H1 (cell line): ENCODE measurements at regions of chr7 and their contacts with region 1.

Region 1: GRCh38 chr7:32495298-32496176 is at the start of gene AVL9:
- DNase-seq: peak; percentile 89 to 97
- H3K4me3 ChIP-seq: peak within 1 kb of the TSS; percentile 81 to 95 (median 84)
- H3K27ac ChIP-seq: peak within 1 kb of the TSS; percentile 91
- H3K4me1 ChIP-seq: peaks cover 0 to 6% (median 0%) of the 10 kb centered on the region in 4 experiments; a peak in 2 of 7 replicates
- H3K27me3 ChIP-seq: no peaks in the 10 kb centered on the region
- CTCF ChIP-seq: no peak; a peak in 1 of 4 replicates
- EP300 ChIP-seq: no peak; a peak in 1 of 3 replicates
- POLR2A ChIP-seq: peak; percentile 90 to 99
- RAD21 ChIP-seq: 0 out of 4 replicates have a peak, but pooled peaks of 1 of the 2 experiments have one; percentile 3
- total RNA-seq, gene AVL9: 42.1 and 43.6 TPM in 2 replicates

Region 2: GRCh38 chr7:32218154-32218467 is 277.4 kb before region 1 on chr7:
- CTCF ChIA-PET with region 1: no interaction called
- POLR2A ChIA-PET with region 1: no interaction called
- DNase-seq: peak in 1 of 2 experiments; percentile 17
- H3K4me3 ChIP-seq: no peak overlapping the region
- H3K27ac ChIP-seq: no peak overlapping the region
- H3K4me1 ChIP-seq: no peaks in the 10 kb centered on the region
- H3K27me3 ChIP-seq: no peaks in the 10 kb centered on the region
- CTCF ChIP-seq: no peak
- EP300 ChIP-seq: no peak
- POLR2A ChIP-seq: no peak
- RAD21 ChIP-seq: no peak

Region 3: GRCh38 chr7:32427769-32428291 is 67.7 kb before region 1 on chr7:
- CTCF ChIA-PET with region 1: no interaction called
- POLR2A ChIA-PET with region 1: no interaction called
- DNase-seq: peak; percentile 87 to 97
- H3K4me3 ChIP-seq: peak overlapping the region; percentile 24 to 58 (median 48); a peak in 7 of 8 replicates
- H3K27ac ChIP-seq: no peak overlapping the region
- H3K4me1 ChIP-seq: peaks cover 0 to 10% (median 0%) of the 10 kb centered on the region in 4 experiments; a peak in 5 of 7 replicates
- H3K27me3 ChIP-seq: peaks cover 13 to 44% (median 23%) of the 10 kb centered on the region in 4 experiments
- CTCF ChIP-seq: peak; percentile 43 to 70 (median 47)
- EP300 ChIP-seq: no peak
- POLR2A ChIP-seq: no peak
- RAD21 ChIP-seq: peak in 1 of 2 experiments; percentile 37; a peak in 2 of 4 replicates

Region 4: DNA sequence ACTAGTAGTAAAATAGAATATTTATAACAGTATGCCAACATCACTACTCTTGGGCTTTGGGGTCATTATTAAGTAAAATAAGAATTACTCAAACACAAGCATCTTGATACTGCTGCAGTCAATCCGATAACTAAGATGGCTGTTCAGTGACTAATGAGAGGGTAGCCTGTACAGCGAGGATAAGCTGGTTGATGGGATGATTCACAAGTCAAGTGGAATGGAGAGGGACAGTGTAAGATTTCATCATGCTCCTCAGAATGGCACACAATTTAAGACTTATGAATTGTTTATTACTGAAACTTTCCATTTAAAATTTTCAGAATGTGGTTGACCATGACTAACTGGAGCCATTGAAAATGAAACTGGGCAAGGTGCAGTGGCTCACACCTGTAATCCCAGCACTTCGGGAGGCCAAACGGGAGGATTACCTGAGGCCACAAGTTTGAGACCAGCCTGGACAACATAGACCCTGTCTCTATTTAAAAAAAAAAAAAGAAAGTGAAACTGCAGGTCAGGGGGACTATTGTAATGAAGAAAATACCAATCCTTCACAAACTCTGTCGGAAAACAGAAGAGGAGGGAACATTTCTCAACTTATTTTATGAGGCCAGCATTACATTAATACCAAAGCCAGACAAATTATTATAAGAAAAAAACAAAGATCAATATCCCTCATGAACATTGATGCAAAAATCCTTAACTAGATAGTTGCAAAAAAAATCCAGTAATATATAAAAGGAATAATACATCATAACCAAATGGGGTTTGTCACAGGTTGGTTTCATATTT is 10.9 kb after region 1 on chr7:
- CTCF ChIA-PET with region 1: interaction called, 3 read pairs
- POLR2A ChIA-PET with region 1: interaction called, 10 read pairs
- DNase-seq: no peak
- H3K4me3 ChIP-seq: no peak overlapping the region
- H3K27ac ChIP-seq: no peak overlapping the region
- H3K4me1 ChIP-seq: no peaks in the 10 kb centered on the region; a peak in 1 of 7 replicates
- H3K27me3 ChIP-seq: no peaks in the 10 kb centered on the region
- CTCF ChIP-seq: no peak
- EP300 ChIP-seq: no peak
- POLR2A ChIP-seq: no peak
- RAD21 ChIP-seq: no peak

Region 5: DNA sequence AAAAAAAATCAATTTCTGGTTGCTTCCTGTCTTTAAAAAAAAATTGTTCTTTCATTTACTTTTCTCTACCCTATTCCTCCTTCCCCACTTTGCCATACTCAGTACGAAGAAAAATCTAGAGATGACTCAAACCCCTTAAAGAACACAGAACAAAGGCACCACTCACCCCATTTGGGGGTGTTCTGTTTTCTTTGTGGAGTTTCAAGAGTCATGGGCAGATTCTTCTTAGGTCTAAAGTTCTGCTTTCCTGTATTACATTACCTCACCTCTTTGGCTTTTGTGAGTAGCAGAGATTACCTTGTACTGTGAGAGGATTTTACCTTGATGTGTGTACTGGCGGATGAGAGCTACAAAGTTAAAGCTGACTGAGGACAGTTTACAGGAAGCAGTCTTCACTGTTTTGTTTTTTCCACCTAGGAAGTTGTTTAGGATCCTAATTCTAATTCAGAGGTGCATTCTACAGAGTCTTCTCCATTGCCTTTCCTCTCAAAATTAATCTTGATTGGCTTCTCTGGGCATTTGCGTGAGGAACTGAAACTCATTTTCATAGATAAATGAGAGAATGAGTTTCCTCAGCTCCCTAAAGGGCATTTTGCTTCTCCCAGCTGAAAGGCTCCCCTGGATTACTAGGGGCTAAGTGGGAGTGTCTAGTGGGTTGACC is 20.5 kb after region 1 on chr7:
- CTCF ChIA-PET with region 1: no interaction called
- POLR2A ChIA-PET with region 1: interaction called, 13 read pairs
- DNase-seq: no peak
- H3K4me3 ChIP-seq: no peak overlapping the region
- H3K27ac ChIP-seq: no peak overlapping the region
- H3K4me1 ChIP-seq: peaks cover 2 to 10% (median 6%) of the 10 kb centered on the region in 4 experiments; a peak in 4 of 7 replicates
- H3K27me3 ChIP-seq: no peaks in the 10 kb centered on the region
- CTCF ChIP-seq: no peak
- EP300 ChIP-seq: no peak
- POLR2A ChIP-seq: no peak
- RAD21 ChIP-seq: no peak

Region 6: GRCh38 chr7:32533276-32534029 is 37.9 kb after region 1 on chr7:
- CTCF ChIA-PET with region 1: no interaction called
- POLR2A ChIA-PET with region 1: interaction called, 15 read pairs
- DNase-seq: no peak
- H3K4me3 ChIP-seq: no peak overlapping the region
- H3K27ac ChIP-seq: no peak overlapping the region
- H3K4me1 ChIP-seq: peaks cover 2 to 12% (median 6%) of the 10 kb centered on the region in 4 experiments; a peak in 6 of 7 replicates
- H3K27me3 ChIP-seq: peaks cover 0 to 1% (median 0%) of the 10 kb centered on the region in 4 experiments; a peak in 1 of 7 replicates
- CTCF ChIP-seq: no peak
- EP300 ChIP-seq: no peak
- POLR2A ChIP-seq: no peak
- RAD21 ChIP-seq: no peak